ENCODE measurements at regions of chr7 and their contacts with region 1.

Region 1: DNA sequence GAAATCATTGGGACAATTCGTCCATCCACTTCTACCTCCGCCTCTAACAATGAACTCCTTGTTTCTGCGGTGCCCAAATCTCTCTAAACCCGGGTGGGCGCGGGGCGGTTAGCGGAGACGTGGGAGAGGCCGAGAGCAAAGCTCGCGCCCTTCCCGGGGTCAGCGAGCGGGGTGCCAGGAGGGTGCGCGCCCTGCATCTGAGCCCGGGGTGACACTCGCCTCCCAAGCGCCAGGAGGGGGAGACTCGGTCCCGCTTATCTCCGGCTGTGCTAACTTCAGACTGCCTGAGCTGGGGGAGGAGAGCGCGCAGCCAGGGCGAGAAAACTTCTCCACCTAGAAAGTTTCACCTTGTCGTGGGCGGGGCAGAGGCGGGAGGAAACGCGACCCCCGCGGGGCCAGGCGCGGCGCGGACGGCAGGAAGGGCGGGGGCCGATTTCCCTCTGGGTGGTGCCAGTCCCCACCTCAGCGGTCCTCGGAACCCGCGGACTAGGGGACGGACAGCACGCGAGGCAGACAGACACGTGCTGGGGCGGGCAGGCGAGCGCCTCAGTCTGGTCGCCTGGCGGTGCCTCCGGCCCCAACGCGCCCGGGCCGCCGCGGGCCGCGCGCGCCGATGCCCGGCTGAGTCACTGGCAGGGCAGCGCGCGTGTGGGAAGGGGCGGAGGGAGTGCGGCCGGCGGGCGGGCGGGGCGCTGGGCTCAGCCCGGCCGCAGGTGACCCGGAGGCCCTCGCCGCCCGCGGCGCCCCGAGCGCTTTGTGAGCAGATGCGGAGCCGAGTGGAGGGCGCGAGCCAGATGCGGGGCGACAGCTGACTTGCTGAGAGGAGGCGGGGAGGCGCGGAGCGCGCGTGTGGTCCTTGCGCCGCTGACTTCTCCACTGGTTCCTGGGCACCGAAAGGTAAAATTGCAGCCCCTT is at the start of gene MET:
- DNase-seq: peak; percentile 33
- H3K4me3 Mint-ChIP-seq: peak within 1 kb of the TSS; percentile 79
- H3K27ac Mint-ChIP-seq: peak within 1 kb of the TSS; percentile 76
- H3K4me1 Mint-ChIP-seq: no peaks in the 10 kb centered on the region
- H3K27me3 Mint-ChIP-seq: peaks cover 67% of the 10 kb centered on the region
- total RNA-seq, gene MET: 3.2 TPM in 2 replicates

Region 2: DNA sequence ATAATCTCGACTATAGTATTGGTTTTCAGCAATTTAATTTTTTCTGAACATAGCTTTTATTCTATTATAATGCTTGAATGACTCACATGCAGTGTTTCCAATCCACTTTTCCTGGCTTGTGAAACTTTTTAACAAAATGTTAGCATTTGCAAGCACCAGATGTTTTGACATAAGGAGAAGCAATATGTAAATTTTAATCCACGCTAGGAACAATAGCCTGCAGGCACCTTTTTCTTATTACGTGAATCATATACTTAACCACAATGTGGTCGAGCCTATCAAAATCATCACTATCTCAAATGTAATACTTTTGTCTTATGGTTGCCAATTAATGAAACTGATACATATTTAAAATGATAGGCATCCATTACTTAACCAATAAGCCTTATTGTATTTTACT is 738.5 kb before region 1 on chr7:
- intact Hi-C with region 1: no loop called
- DNase-seq: no peak
- H3K4me3 Mint-ChIP-seq: no peak overlapping the region
- H3K27ac Mint-ChIP-seq: no peak overlapping the region
- H3K4me1 Mint-ChIP-seq: no peaks in the 10 kb centered on the region
- H3K27me3 Mint-ChIP-seq: no peaks in the 10 kb centered on the region

Region 3: GRCh38 chr7:116173051-116174028 is 498.6 kb before region 1 on chr7:
- intact Hi-C with region 1: loop called (anchors 10 kb)
- DNase-seq: no peak
- H3K4me3 Mint-ChIP-seq: no peak overlapping the region
- H3K27ac Mint-ChIP-seq: no peak overlapping the region
- H3K4me1 Mint-ChIP-seq: no peaks in the 10 kb centered on the region
- H3K27me3 Mint-ChIP-seq: peaks cover 13% of the 10 kb centered on the region

Region 4: GRCh38 chr7:116786791-116787443 is 115.0 kb after region 1 on chr7:
- intact Hi-C with region 1: loop called (anchors 5 kb)
- DNase-seq: no peak
- H3K4me3 Mint-ChIP-seq: no peak overlapping the region
- H3K27ac Mint-ChIP-seq: no peak overlapping the region
- H3K4me1 Mint-ChIP-seq: no peaks in the 10 kb centered on the region
- H3K27me3 Mint-ChIP-seq: no peaks in the 10 kb centered on the region

Region 5: GRCh38 chr7:116802746-116803152 is 130.8 kb after region 1 on chr7:
- intact Hi-C with region 1: loop called (anchors 1 kb)
- DNase-seq: peak; percentile 32
- H3K4me3 Mint-ChIP-seq: no peak overlapping the region
- H3K27ac Mint-ChIP-seq: peak overlapping the region; percentile 64
- H3K4me1 Mint-ChIP-seq: peaks cover 16% of the 10 kb centered on the region
- H3K27me3 Mint-ChIP-seq: peaks cover 10% of the 10 kb centered on the region

Region 6: DNA sequence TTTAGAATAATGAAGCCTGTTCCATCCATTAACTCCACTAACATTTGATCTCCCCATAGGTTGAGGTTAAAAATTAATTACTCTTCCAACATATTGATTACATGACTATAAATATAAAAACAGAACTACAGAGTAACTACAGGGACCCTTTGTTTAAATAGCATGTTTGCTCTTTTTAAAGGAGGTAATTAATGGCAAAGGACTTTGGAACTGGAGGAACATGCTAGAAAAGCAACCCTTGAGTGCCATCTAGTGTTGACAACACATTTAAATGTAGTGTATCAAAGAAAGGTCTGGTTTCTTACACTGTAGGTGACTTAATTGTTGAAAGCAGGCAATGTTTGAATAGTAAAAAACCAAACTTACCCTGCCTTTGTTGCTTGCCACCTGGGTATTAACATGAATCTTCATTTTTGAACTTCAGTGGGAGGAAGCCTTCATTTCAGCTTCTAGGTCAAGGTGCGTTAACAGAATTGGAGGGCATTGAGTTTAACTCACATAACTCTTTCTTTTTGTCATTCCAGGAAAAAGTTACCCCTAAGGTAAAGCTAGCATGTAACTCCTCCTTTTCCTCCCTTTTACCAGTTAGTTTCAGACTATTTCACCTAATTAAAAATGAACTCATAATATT is 137.8 kb after region 1 on chr7:
- intact Hi-C with region 1: loop called (anchors 1 kb)
- DNase-seq: peak; percentile 3
- H3K4me3 Mint-ChIP-seq: no peak overlapping the region
- H3K27ac Mint-ChIP-seq: no peak overlapping the region
- H3K4me1 Mint-ChIP-seq: no peaks in the 10 kb centered on the region
- H3K27me3 Mint-ChIP-seq: peaks cover 9% of the 10 kb centered on the region

Region 7: DNA sequence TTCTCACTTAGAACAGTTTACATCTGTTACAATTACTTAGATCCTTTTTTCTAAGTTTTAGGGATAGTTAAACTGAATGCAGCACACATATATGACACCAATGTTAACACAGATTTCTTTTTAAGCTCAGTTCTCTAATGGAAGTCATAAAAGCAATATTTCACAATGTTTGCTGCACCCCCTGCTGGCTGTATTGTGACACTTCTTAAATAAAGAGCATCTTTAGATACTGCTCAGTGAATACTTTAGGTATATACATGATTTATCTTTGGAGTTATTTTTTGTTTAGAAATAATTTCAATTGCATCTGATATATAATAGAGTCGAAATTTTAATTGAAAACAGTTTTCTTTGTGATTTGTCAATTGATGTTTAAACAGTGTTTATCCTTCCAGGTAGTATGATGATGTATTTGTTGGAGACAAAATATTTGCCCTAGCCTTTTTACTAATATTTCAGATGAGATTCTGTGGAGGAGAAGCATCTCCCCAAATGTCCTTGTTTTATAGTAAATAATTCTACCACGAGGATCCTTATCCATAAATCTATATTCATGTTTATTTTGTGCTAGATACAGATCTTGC is 455.7 kb after region 1 on chr7:
- intact Hi-C with region 1: loop called (anchors 2 kb)
- DNase-seq: no peak
- H3K4me3 Mint-ChIP-seq: no peak overlapping the region
- H3K27ac Mint-ChIP-seq: no peak overlapping the region
- H3K4me1 Mint-ChIP-seq: no peaks in the 10 kb centered on the region
- H3K27me3 Mint-ChIP-seq: peaks cover 9% of the 10 kb centered on the region